HAP-1 (cell line): ENCODE measurements at regions of chr17 and their contacts with region 1.

Region 1: DNA sequence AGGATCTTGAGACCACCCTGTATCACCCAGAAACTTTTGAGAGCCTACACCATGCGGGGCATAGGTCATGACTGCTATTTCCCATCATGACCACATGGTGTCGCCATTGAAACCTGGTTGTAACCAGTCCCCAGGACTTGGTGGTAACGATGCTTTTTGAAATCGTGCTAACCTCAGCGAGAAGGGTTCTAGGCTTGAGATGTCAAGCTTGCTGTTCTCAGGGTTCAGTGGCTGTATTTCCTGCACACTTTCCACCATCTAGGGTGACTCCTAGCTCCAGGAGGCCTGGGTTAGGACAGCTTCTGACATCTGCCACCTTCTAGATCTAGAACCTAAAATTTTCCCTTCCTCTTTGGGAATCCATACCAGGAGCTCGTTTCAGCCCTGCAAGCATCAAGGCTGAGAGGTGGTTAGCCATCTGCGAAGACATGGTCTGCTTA is 13.0 kb upstream of the SPNS3 start:
- DNase-seq: peak; percentile 75 to 76
- H3K4me3 ChIP-seq: no peak overlapping the region
- H3K4me1 ChIP-seq: peaks cover 3% of the 10 kb centered on the region
- H3K27me3 ChIP-seq: no peaks in the 10 kb centered on the region

Region 2: DNA sequence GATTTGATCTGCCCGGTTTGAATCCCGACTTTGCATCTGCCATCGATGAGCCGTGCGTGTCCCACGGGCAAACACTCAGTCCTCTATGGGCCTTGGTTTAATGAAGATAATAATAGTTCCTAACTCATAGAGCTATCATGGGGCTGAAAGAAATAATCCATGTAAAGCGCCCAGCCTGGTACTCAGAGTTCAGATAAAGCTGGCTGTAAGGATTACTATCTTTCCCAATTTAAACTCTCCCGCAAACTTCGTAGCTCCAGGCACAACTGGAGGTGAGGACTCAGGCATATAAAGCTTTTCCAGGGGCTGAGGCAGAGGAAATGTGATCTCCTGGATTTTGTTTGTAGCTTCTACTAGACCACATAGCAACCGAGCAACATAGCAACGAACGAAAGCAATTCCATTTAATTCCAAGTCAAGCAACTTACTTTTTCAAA is 204.5 kb after region 1 on chr17:
- in situ Hi-C with region 1: loop called (anchors 10 kb)
- DNase-seq: no peak
- H3K4me3 ChIP-seq: no peak overlapping the region
- H3K4me1 ChIP-seq: no peaks in the 10 kb centered on the region
- H3K27me3 ChIP-seq: peaks cover 2% of the 10 kb centered on the region; the same call in 1 of the 2 replicates